Breast epithelium (tissue), 4 donors: ENCODE measurements at regions of chr18 and their contacts with region 1.

Region 1: GRCh38 chr18:75809926-75810255 is 382.4 kb upstream of the SMIM21 start:
- DNase-seq: no peak
- H3K4me3 ChIP-seq: no peak overlapping the region
- H3K27ac ChIP-seq: no peak overlapping the region
- H3K4me1 ChIP-seq: no peaks in the 10 kb centered on the region
- H3K27me3 ChIP-seq: no peaks in the 10 kb centered on the region
- CTCF ChIP-seq: no peak
- POLR2A ChIP-seq: no peak

Region 2: DNA sequence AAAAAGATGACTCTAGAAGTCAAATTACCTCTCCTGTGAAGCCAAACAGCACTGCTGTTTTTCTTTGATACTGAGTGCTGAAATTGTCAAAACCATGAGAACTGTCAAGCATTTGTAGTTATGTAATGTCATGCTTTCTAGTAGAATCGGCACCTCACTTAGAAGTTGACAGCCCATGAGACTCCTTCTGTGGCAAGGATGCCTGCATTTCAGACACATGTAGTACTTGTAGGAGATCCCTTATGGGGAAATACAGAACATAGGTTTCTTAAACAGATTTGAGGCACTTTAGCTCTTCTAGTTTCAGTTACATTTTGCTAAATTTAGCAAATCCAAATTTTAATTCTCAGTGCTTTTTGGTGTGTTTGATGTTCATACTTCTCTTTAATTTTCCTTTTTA is 1196.5 kb before region 1 on chr18:
- intact Hi-C with region 1: loop called (anchors 10 kb)
- DNase-seq: no peak
- H3K4me3 ChIP-seq: no peak overlapping the region
- H3K27ac ChIP-seq: no peak overlapping the region
- H3K4me1 ChIP-seq: no peaks in the 10 kb centered on the region
- H3K27me3 ChIP-seq: no peaks in the 10 kb centered on the region
- CTCF ChIP-seq: no peak
- POLR2A ChIP-seq: no peak